ENCODE measurements at regions of chr10 and their contacts with region 1.

Region 1: DNA sequence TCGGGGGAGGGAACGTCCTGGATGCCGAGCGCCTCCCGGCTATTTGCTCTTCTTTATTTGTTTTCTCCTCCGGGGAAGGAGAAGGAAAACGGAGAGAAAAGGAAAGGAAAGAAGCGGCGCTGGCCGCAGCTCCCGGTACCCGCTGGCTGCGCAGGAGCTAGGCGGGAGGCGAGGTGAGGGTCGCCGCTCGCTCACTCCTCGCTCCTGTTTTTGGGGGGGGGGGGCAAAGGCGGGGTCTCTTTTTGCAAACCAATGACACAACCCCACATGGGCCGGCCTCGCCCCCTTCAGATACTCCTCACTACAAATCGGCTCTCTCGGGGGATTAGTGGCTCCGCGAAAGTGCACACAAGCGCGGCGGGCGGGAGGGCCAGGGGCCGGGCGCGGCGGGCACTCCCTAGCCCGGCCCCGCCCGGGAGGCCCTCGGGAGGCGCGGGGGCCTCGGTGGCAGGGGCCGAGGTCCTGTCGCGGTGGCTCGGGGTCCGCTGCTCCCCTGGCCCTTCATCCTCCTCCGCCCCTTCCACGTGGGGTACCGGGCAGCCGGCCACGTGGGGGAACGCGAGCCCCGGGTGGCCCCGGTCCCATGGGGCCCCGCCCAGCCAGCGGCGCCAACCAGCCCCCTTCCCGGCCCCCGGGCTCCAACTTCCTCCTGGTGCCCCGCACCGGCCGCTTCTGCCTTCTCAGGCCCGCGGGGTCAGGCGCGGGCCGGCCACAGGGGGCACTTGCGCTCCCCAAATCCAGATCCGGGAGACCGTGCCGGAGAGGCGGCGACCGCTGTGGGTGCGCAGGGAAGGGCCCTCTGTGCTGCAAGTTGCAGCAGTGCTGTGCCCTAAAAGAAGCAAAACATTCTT is 718 bp upstream of the CTBP2 start:
- DNase-seq: peak; percentile 89
- ATAC-seq: peak; percentile 76

Region 2: GRCh38 chr10:125048101-125048864 is 112.8 kb before region 1 on chr10:
- intact Hi-C with region 1: loop called (anchors 1 kb)
- DNase-seq: peak; percentile 92
- ATAC-seq: peak; percentile 87

Region 3: DNA sequence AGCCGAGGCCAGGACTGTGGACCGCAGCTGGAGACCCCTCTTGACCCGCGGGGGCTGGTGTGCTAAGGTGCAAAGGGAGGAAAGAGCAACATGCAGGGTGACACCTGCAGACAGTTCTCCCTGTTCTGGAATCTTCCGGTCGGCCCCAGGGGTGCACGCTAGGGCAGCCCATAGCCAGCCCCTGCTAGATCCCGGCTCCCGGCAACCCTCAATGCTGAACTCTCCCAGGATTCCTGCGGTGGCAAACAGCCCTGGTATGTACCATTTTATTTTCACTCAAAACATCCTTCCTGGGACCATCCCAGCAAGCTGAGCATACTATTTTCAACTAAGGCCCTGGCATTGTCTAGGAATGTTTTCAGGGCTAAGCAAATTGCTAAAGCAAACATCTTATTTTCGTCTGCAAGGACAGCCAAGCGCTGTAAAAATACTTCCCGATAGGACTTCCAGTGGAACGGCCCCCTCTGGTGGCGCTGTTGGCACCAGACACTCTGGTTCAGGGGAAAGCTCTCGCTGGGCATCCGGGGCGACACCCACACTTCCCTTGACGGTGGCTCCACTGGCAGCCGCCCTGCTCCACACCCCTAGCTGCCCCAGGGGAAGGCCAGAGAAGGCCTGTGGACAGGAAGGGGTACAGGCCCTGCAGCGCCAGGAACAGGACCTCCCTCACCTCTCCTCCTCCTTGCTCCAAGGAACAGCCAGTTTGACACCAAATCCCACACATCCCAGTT is 100.1 kb before region 1 on chr10:
- intact Hi-C with region 1: loop called (anchors 5 kb)
- DNase-seq: peak; percentile 92
- ATAC-seq: peak; percentile 51

Region 4: DNA sequence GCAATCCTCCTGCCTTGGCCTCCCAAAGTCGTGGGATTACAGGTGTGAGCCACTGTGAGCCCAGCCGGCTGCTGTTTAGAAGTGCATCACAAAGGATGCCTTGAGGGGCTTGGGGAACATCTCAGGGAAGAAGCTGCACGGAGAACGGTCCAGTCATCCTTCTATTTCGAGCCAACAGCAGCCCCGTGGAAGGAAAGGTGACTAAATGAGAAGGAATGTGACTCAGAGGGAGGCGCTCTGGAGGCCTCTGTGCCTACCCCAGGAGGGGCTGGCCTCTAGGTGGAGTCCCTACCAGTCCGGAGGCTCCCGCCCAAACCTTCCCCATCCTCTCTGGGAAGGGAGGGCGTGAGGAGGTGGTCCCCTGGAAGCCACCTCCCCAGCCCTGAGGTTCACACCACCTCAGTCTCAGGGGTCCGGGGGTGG is 76.9 kb before region 1 on chr10:
- intact Hi-C with region 1: loop called (anchors 2 kb)
- DNase-seq: no peak
- ATAC-seq: peak; percentile 22

Region 5: DNA sequence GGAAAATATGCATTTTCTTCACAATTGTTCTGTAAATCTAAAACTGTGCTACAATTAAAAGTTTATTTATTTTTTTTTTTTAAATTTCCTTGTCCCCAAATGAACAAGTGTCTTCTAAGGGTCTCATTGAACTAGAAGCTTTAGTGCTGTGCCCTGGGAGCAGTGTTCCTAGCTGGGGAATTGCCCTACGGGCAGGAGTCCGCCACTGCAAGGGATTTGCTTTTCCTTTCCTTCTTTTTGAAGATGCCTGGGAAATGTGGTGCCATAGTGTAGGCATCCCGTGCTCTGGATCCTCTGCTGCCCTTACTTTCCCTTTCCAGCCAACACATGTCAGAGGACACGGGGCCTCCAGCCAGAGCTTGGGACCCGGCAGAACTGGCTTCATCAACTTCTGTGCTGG is 176.4 kb after region 1 on chr10:
- intact Hi-C with region 1: loop called (anchors 2 kb)
- DNase-seq: no peak
- ATAC-seq: no peak